ENCODE measurements at regions of chr12 and their contacts with region 1.

Region 1: GRCh38 chr12:109775172-109775881 is 57.9 kb downstream of the TRPV4 start:
- DNase-seq: peak; percentile 87
- H3K4me3 ChIP-seq: no peak overlapping the region
- H3K27ac ChIP-seq: no peak overlapping the region
- H3K4me1 ChIP-seq: peaks cover 0 to 41% (median 16%) of the 10 kb centered on the region in 6 donors
- H3K27me3 ChIP-seq: peaks cover 0 to 6% (median 0%) of the 10 kb centered on the region in 7 donors
- CTCF ChIP-seq: peak; percentile 47 to 90 (median 80)
- POLR2A ChIP-seq: no peak

Region 2: GRCh38 chr12:109358154-109358869 is 417.0 kb before region 1 on chr12:
- intact Hi-C with region 1: no loop called
- DNase-seq: no peak
- H3K4me3 ChIP-seq: peak overlapping the region in 1 of 8 donors; percentile 35
- H3K27ac ChIP-seq: peak overlapping the region in 2 of 8 donors; percentile 16 to 45
- H3K4me1 ChIP-seq: no peaks in the 10 kb centered on the region
- H3K27me3 ChIP-seq: peaks cover 0 to 33% (median 0%) of the 10 kb centered on the region in 7 donors
- CTCF ChIP-seq: no peak
- POLR2A ChIP-seq: no peak

Region 3: GRCh38 chr12:109432841-109433304 is 342.5 kb before region 1 on chr12:
- intact Hi-C with region 1: loop called (anchors 5 kb)
- DNase-seq: peak; percentile 94
- H3K4me3 ChIP-seq: peak overlapping the region in 1 of 8 donors; percentile 45
- H3K27ac ChIP-seq: peak overlapping the region in 4 of 8 donors; percentile 0 to 52 (median 15)
- H3K4me1 ChIP-seq: peaks cover 8 to 17% (median 12%) of the 10 kb centered on the region in 6 donors
- H3K27me3 ChIP-seq: no peaks in the 10 kb centered on the region
- CTCF ChIP-seq: peak; percentile 5 to 87 (median 78)
- POLR2A ChIP-seq: no peak

Region 4: DNA sequence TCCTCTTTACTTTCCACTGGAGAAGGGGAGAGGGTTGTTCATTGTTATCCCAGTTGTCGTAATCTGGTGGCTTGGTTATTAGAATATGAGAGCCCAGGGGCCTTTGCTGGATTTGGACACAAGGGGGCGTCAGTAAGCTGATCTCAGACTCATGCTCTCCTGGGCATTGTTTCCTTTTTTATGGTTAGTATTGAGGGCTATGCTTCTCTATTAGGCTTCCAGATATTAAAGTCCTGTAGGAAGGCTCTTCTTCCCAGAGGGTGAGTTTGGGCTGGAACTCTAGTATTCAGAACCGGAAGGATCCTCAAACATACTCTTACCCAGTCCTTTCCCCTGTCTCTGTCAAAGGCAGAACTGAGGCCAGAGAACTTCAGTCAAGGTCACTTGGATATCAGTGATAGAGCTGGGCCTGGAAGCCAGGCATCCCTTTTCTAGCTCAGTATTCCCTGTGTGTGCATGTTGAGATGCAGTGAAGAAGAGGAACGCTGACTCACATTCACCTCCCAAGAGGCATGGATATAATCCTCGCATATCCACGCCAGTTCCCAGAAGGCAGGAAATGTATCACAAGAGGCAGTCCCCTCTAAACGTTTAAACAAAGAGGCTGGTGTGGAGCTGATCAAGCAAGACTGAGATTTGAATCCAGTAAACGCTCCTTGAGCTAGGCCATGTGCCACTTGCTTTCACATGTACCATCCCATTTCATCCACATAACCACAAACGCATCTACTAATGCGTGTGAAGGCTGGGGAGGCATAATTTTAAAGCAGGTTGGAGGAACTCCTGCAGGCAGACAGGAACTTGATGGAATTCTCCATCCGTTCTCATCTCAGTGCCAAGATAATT is 256.3 kb before region 1 on chr12:
- intact Hi-C with region 1: loop called (anchors 5 kb)
- DNase-seq: peak; percentile 70
- H3K4me3 ChIP-seq: no peak overlapping the region
- H3K27ac ChIP-seq: peak overlapping the region in 6 of 8 donors; percentile 23 to 78 (median 53)
- H3K4me1 ChIP-seq: peaks cover 0 to 15% (median 4%) of the 10 kb centered on the region in 6 donors
- H3K27me3 ChIP-seq: no peaks in the 10 kb centered on the region
- CTCF ChIP-seq: peak; percentile 49 to 88 (median 75)
- POLR2A ChIP-seq: no peak

Region 5: DNA sequence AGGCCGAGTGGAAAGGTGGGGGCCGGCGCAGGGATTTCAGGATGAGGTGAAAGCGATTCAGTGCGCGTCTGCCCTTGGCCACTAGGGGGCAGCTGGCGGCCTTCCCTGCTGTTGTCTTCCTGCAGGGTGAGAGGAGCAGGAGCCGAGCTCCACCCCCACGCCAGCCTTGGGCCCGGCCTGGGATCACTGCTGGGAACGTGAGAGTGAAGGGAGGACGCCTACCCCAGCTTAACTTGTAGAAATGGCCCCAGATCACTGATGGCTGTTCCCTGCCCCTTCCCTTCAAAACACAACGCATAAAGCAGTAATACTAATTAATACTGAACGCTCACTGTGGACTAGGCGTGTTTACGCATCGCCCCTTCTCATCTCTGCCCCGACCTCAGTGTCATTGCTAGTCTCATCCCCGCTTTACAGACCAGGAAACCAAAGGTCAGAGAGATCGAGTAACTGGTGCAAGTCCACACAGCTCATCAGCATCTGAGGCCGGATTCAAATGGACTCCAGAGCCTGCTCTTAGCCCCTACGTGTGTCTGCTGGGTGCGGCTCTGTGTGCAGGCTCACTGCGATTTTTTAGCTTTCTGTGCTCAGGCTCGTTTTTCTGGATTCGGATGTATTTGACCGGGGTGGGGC is 177.4 kb before region 1 on chr12:
- intact Hi-C with region 1: loop called (anchors 2 kb)
- DNase-seq: peak; percentile 92
- H3K4me3 ChIP-seq: no peak overlapping the region
- H3K27ac ChIP-seq: no peak overlapping the region
- H3K4me1 ChIP-seq: peaks cover 6 to 41% (median 16%) of the 10 kb centered on the region in 6 donors
- H3K27me3 ChIP-seq: no peaks in the 10 kb centered on the region
- CTCF ChIP-seq: peak; percentile 56 to 96 (median 92)
- POLR2A ChIP-seq: no peak

Region 6: GRCh38 chr12:109713187-109713984 is 61.9 kb before region 1 on chr12 and contains the start of gene FAM222A:
- intact Hi-C with region 1: loop called (anchors 10 kb)
- DNase-seq: peak; percentile 99
- H3K4me3 ChIP-seq: peak within 1 kb of the TSS; percentile 72 to 95 (median 90)
- H3K27ac ChIP-seq: peak within 1 kb of the TSS in 7 of 8 donors; percentile 26 to 79 (median 68)
- H3K4me1 ChIP-seq: peaks cover 4 to 56% (median 26%) of the 10 kb centered on the region in 6 donors
- H3K27me3 ChIP-seq: peaks cover 0 to 89% (median 23%) of the 10 kb centered on the region in 7 donors
- CTCF ChIP-seq: peak in 6 of 11 experiments; percentile 28 to 61 (median 40)
- POLR2A ChIP-seq: peak in 1 of 3 donors; percentile 49
- total RNA-seq, gene FAM222A: 13.9 to 30.7 (median 21.5) TPM

Region 7: GRCh38 chr12:109861689-109862314 is 86.5 kb after region 1 on chr12:
- intact Hi-C with region 1: no loop called
- DNase-seq: no peak
- H3K4me3 ChIP-seq: no peak overlapping the region
- H3K27ac ChIP-seq: no peak overlapping the region
- H3K4me1 ChIP-seq: peaks cover 7 to 44% (median 21%) of the 10 kb centered on the region in 6 donors
- H3K27me3 ChIP-seq: no peaks in the 10 kb centered on the region
- CTCF ChIP-seq: no peak
- POLR2A ChIP-seq: no peak

Measured in spleen (tissue), 13 donors.